ENCODE measurements at regions of chr18 and their contacts with region 1.

Region 1: DNA sequence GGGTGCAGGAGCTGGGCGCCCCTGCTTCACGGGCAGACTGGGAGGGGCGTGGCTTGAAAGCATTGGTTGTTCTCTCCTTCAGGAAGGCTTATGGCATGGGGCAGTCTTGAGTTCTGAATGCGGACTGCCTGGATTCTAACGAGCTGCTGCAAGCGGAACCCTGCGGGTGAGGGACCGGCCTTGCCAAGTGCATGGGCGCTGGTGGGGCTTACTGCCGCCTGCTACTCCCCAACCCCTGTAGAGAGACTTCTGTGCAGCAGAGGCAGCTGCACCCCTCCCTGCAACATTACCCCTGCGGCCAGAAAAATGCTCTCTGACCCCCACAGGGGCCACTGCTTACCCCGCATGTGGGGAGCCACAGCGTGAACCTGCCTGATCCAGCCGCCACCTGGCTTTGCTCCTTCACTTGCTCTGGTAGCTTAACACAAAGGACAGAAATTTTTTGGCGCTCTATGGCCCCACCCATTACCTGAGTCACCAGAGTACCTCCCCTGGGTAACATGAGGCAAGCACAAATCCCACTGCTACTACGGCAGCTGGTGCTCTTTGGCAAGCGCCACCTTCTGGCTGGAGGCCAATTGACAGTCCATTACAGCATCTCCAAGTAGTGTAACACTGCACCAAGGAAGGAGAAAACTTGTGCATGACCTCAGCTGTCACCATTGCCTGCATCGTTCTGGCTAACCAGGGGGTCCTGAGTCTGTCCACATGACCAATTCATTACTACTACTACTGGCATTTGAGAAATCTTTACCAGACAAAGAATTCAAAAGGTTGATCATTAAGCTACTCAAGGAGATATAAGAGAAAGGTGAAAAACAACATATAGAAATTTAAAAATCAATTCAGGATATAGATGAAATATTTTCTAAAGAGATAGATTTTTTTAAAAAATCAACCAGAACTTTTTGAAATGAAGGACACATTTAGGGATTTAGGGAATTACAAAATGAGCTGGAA is 35.4 kb downstream of the MYL12B start:
- DNase-seq: peak; percentile 97
- ATAC-seq: peak; percentile 98
- H3K4me3 Mint-ChIP-seq: peak overlapping the region; percentile 85
- H3K27ac Mint-ChIP-seq: peak overlapping the region; percentile 74
- H3K4me1 Mint-ChIP-seq: peaks cover 13% of the 10 kb centered on the region
- H3K27me3 Mint-ChIP-seq: peaks cover 37% of the 10 kb centered on the region

Region 2: GRCh38 chr18:3262247-3263131 is 34.8 kb before region 1 on chr18:
- CTCF ChIA-PET with region 1: interaction called, 11 read pairs
- DNase-seq: peak; percentile 65
- ATAC-seq: peak; percentile 36
- H3K4me3 Mint-ChIP-seq: peak overlapping the region; percentile 94
- H3K27ac Mint-ChIP-seq: peak overlapping the region; percentile 100
- H3K4me1 Mint-ChIP-seq: peaks cover 65% of the 10 kb centered on the region
- H3K27me3 Mint-ChIP-seq: no peaks in the 10 kb centered on the region

Region 3: GRCh38 chr18:3321133-3321812 is 24.0 kb after region 1 on chr18:
- CTCF ChIA-PET with region 1: interaction called, 14 read pairs
- DNase-seq: no peak
- ATAC-seq: no peak
- H3K4me3 Mint-ChIP-seq: no peak overlapping the region
- H3K27ac Mint-ChIP-seq: no peak overlapping the region
- H3K4me1 Mint-ChIP-seq: peaks cover 24% of the 10 kb centered on the region
- H3K27me3 Mint-ChIP-seq: peaks cover 13% of the 10 kb centered on the region

Region 4: DNA sequence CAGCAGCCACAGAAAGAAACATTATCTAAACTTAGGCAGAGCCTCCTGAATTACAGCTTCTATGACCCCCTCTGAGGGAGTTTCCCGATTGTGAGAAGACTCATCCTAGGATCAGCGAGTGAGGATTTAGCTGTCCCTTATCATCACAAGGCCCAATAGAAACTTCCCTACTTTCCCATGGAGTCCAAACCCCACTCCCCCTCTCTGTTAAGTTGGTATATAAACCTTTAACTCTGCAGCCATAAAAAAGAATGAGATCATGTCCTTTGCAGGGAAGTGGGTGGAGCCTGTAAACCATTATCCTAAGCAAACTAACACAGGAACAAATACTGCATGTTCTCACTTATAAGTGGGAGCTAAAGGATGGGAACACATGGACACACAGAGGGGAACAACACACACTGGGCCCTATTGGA is 43.4 kb after region 1 on chr18:
- CTCF ChIA-PET with region 1: no interaction called
- DNase-seq: no peak
- ATAC-seq: no peak
- H3K4me3 Mint-ChIP-seq: no peak overlapping the region
- H3K27ac Mint-ChIP-seq: no peak overlapping the region
- H3K4me1 Mint-ChIP-seq: peaks cover 6% of the 10 kb centered on the region
- H3K27me3 Mint-ChIP-seq: no peaks in the 10 kb centered on the region

Region 5: GRCh38 chr18:3585656-3586509 is 288.6 kb after region 1 on chr18:
- CTCF ChIA-PET with region 1: interaction called, 14 read pairs
- DNase-seq: peak; percentile 82
- ATAC-seq: peak; percentile 92
- H3K4me3 Mint-ChIP-seq: no peak overlapping the region
- H3K27ac Mint-ChIP-seq: no peak overlapping the region
- H3K4me1 Mint-ChIP-seq: peaks cover 25% of the 10 kb centered on the region
- H3K27me3 Mint-ChIP-seq: no peaks in the 10 kb centered on the region

Region 6: DNA sequence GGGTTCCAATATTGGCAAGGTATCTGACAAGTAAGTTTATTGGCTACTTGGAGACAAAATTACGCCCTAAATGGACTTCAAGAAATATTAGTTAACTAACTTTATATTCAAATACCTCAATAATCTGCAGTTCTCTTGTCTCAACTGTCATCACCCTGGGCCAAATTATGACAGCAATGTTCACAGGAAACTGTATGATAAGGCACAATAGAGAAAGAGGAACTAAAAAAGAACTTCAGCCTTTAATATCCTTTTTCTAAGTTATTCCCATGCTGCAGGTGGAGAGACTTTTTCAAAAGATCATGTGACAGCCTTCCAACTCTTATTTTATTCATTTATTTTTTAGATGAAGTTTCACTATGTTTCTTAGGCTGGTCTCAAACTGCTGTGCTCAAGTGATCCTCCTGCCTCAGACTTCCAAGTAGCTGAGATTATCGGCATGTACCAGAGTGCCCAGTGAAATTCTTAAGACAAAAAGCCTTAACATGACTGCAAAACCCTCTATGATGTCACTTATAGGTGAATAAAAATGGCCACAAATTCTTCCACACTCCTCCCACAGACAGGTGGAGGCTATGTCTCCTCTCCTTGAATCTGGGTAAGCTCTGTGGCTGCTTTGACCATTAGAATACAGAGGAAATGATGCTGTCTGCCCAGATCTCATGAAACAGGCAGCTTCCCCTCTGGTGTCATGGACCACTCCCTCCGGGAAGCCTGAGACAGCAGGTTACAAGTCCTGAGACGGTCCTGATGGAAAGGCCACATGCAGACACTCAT is 363.6 kb after region 1 on chr18:
- CTCF ChIA-PET with region 1: interaction called, 31 read pairs
- DNase-seq: no peak
- ATAC-seq: no peak
- H3K4me3 Mint-ChIP-seq: no peak overlapping the region
- H3K27ac Mint-ChIP-seq: peak overlapping the region; percentile 64
- H3K4me1 Mint-ChIP-seq: peaks cover 20% of the 10 kb centered on the region
- H3K27me3 Mint-ChIP-seq: no peaks in the 10 kb centered on the region